Heart right ventricle (tissue), 16 donors: ENCODE measurements at regions of chr19 and their contacts with region 1.

Region 1: GRCh38 chr19:58558623-58559274 is 338 bp upstream of the UBE2M start:
- DNase-seq: peak; percentile 99 to 100
- ATAC-seq: peak; percentile 76 to 93 (median 84)
- H3K4me3 ChIP-seq: peak overlapping the region; percentile 57 to 98 (median 76)
- H3K27ac ChIP-seq: peak overlapping the region; percentile 98 to 100 (median 100)
- H3K4me1 ChIP-seq: peaks cover 33 to 76% (median 65%) of the 10 kb centered on the region in 9 donors
- H3K27me3 ChIP-seq: peaks cover 0 to 24% (median 0%) of the 10 kb centered on the region in 7 donors
- CTCF ChIP-seq: peak in 1 of 9 donors; percentile 9

Region 2: GRCh38 chr19:58543826-58544590 is 14.7 kb before region 1 on chr19 and contains the start of gene TRIM28:
- intact Hi-C with region 1: loop called in 1 of 10 experiments (anchors 1 kb)
- DNase-seq: peak; percentile 98 to 99
- ATAC-seq: peak; percentile 95 to 98 (median 98)
- H3K4me3 ChIP-seq: peak within 1 kb of the TSS; percentile 67 to 97 (median 88)
- H3K27ac ChIP-seq: peak within 1 kb of the TSS; percentile 89 to 99 (median 96)
- H3K4me1 ChIP-seq: peaks cover 14 to 34% (median 29%) of the 10 kb centered on the region in 9 donors
- H3K27me3 ChIP-seq: no peaks in the 10 kb centered on the region
- CTCF ChIP-seq: no peak
- total RNA-seq, gene TRIM28: 121 to 163 (median 150) TPM

Region 3: DNA sequence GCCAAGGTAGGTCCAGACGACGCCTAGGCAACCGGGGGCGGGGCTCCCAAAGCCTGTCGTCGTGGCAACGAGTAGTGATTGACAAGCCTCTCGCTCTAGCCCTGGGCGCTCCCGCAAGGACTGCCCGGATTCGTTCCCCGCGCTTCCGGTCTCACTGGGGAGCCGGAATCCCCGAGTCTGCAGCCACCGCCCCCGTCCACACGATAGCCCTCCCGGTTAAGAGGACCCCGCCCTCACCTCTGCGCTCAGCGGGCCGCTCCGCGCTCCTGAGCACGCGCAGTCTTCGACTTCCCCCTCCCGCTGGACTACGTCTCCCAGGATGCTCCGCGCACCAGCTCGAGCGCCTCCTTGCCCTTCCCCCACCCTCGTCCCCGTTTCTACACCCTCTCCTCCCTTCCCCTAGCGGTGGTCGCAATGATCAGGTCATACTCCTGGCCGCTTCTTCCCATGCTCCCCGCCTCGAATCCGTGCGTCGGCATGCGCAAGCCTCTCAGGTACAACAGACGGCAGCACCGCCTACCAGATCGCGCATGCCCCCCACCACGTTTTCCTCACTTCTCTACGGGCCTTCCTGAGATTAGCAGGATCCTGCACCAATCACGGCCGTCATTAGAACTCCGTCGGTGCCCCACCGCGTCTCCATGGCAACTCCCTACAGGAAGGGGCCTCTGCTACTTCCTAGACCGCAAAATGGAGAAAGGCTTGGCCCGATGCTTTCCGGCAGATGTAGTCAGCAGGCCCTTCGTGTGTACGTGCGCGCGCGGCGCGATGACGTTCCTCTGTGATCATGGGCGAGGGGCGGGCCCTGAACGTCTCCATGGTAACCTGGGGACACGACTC is 14.3 kb after region 1 on chr19 and contains the start of gene MZF1:
- intact Hi-C with region 1: loop called in 2 of 10 experiments (anchors 1 kb)
- DNase-seq: peak; percentile 99 to 100
- ATAC-seq: peak; percentile 77 to 89 (median 84)
- H3K4me3 ChIP-seq: peak within 1 kb of the TSS; percentile 45 to 82 (median 65)
- H3K27ac ChIP-seq: peak within 1 kb of the TSS; percentile 79 to 98 (median 92)
- H3K4me1 ChIP-seq: peaks cover 4 to 36% (median 21%) of the 10 kb centered on the region in 9 donors
- H3K27me3 ChIP-seq: no peaks in the 10 kb centered on the region
- CTCF ChIP-seq: peak in 2 of 9 donors; percentile 16 to 23
- total RNA-seq, gene MZF1: 4.4 to 12.0 (median 8.3) TPM